ENCODE measurements at regions of chr5 and their contacts with region 1.

Region 1: DNA sequence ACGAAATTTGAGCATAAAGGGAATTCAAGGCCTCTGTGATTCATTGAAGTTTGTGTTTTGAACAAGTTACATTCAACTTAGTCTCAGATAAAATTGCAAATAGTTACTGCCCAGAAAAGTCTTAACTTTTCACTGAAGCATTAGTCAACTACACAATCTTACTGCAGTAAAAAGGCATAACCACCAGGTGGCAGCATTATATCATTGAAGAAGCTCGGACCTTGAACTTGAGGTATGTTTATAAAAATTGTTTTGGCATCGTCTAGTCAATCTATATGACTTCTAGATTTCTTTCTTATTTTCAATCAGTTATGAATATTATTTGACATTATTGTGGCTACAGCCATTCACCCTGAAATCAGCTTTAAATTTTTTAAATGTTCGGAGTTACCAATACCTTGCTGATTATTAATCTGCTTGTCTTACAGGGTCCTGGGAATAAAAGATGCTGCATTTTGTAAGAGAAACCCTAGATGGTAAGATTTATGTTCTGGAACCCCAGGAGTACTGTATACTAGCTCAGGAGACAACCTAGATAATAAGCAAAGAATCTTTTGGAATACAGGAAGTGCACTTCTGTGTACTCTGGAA is 83.9 kb upstream of the GRAMD2B start:
- DNase-seq: peak; percentile 24 to 70
- H3K4me3 ChIP-seq: no peak overlapping the region
- H3K27ac ChIP-seq: no peak overlapping the region
- H3K4me1 ChIP-seq: no peaks in the 10 kb centered on the region
- H3K27me3 ChIP-seq: no peaks in the 10 kb centered on the region
- CTCF ChIP-seq: peak; percentile 80 to 88 (median 84)
- POLR2A ChIP-seq: no peak

Region 2: GRCh38 chr5:125870256-125870655 is 469.1 kb before region 1 on chr5:
- intact Hi-C with region 1: no loop called
- DNase-seq: no peak
- H3K4me3 ChIP-seq: no peak overlapping the region
- H3K27ac ChIP-seq: no peak overlapping the region
- H3K4me1 ChIP-seq: no peaks in the 10 kb centered on the region
- H3K27me3 ChIP-seq: no peaks in the 10 kb centered on the region
- CTCF ChIP-seq: no peak
- POLR2A ChIP-seq: no peak

Region 3: GRCh38 chr5:126542441-126542840 is 203.1 kb after region 1 on chr5:
- intact Hi-C with region 1: loop called (anchors 2 kb)
- DNase-seq: no peak
- H3K4me3 ChIP-seq: no peak overlapping the region
- H3K27ac ChIP-seq: no peak overlapping the region
- H3K4me1 ChIP-seq: peaks cover 0 to 6% of the 10 kb centered on the region in 2 donors
- H3K27me3 ChIP-seq: no peaks in the 10 kb centered on the region
- CTCF ChIP-seq: no peak
- POLR2A ChIP-seq: no peak